K562 (cell line): ENCODE measurements at regions of chr21 and their contacts with region 1.

Region 1: GRCh38 chr21:39445321-39446269 is at the start of gene LCA5L:
- DNase-seq: peak; percentile 97 to 100 (median 100)
- ATAC-seq: peak; percentile 89
- H3K4me3 ChIP-seq: peak within 1 kb of the TSS; percentile 87
- H3K27ac ChIP-seq: peak within 1 kb of the TSS; percentile 95
- H3K4me1 ChIP-seq: peaks cover 25% of the 10 kb centered on the region in 2 experiments
- H3K27me3 ChIP-seq: no peaks in the 10 kb centered on the region
- CTCF ChIP-seq: peak; percentile 9 to 15 (median 10); a peak in 3 of 6 replicates
- EP300 ChIP-seq: 0 out of 2 replicates have a peak, but pooled peaks have one; percentile 2
- POLR2A ChIP-seq: peak; percentile 92
- RAD21 ChIP-seq: peak in 1 of 2 experiments; percentile 8; a peak in 1 of 4 replicates
- polyA plus RNA-seq, gene LCA5L: 4.2 to 4.9 TPM

Region 2: GRCh38 chr21:38544661-38545060 is 900.9 kb before region 1 on chr21:
- CTCF ChIA-PET with region 1: no interaction called
- POLR2A ChIA-PET with region 1: no interaction called
- in situ Hi-C with region 1: no loop called
- intact Hi-C with region 1: no loop called
- DNase-seq: no peak
- ATAC-seq: no peak
- H3K4me3 ChIP-seq: no peak overlapping the region
- H3K27ac ChIP-seq: no peak overlapping the region
- H3K4me1 ChIP-seq: no peaks in the 10 kb centered on the region
- H3K27me3 ChIP-seq: peaks cover 0 to 2% of the 10 kb centered on the region in 2 experiments; a peak in 1 of 5 replicates
- CTCF ChIP-seq: no peak
- EP300 ChIP-seq: no peak
- POLR2A ChIP-seq: no peak
- RAD21 ChIP-seq: no peak

Region 3: DNA sequence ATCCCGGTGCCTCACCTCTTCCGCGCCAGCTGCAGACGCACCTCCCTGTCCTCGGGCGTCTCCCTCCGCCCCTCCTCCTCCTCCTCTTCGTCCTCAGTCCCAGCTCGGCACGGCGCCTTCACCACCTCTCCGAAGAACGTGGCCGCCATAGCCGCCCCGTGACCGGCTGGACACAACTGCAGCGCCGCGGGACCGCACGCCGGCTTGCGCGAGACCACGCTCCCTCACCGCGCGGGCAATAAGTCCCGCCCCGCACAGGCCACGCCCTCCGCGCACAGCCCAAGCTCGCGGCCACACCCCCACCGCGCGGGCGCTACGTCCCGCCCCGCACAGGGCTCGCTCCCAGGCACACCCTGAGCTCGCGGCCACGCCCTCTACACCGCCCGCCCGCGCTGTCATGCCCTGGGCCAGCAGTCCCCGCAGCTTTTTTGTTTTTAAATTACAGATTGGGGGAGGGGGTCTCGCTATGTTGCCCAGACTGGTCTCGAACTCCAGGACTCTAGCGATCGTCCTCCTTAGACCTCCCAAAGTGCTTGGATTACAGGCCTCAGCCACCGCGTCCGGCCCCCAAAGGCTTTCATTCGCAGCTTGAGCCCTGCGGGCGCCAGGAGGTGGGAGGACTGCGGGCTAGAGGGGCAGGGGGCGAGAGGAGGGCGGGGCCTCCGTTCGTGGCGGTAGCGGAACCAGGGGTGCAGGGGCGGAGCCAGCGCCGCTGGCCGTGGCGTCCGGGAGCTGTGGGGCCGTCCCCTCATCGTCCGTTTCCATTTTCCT is 262.2 kb before region 1 on chr21 and contains the start of gene PSMG1:
- CTCF ChIA-PET with region 1: no interaction called
- POLR2A ChIA-PET with region 1: interaction called, 3 read pairs
- in situ Hi-C with region 1: no loop called
- intact Hi-C with region 1: loop called (anchors 5 kb)
- DNase-seq: peak; percentile 95 to 99 (median 96)
- ATAC-seq: peak; percentile 92
- H3K4me3 ChIP-seq: peak within 1 kb of the TSS; percentile 82
- H3K27ac ChIP-seq: peak within 1 kb of the TSS; percentile 93
- H3K4me1 ChIP-seq: peaks cover 8 to 11% of the 10 kb centered on the region in 2 experiments; a peak in 4 of 5 replicates
- H3K27me3 ChIP-seq: no peaks in the 10 kb centered on the region
- CTCF ChIP-seq: no peak
- EP300 ChIP-seq: no peak
- POLR2A ChIP-seq: peak; percentile 97
- RAD21 ChIP-seq: no peak
- polyA plus RNA-seq, gene PSMG1: 54.5 to 88.1 TPM

Region 4: DNA sequence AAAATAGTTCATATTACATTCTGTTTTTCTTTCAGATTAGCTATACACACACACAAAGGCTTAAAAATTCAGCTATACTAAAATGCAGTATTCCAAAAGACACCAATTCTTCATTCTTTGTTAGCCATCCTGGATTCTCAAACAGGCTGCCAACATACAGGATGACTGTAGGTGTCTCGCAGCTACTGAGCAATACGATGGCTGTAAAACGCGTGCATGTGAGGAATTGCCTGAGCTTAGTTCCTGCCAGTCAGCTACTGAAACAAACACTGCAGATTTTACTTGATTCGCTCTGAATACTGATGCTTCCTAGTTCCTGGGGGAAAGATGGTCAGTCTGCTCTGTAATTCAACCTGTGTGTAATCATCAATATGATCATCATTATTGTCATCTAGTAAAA is 72.0 kb before region 1 on chr21:
- CTCF ChIA-PET with region 1: interaction called, 3 read pairs
- POLR2A ChIA-PET with region 1: interaction called, 3 read pairs
- in situ Hi-C with region 1: no loop called
- intact Hi-C with region 1: loop called (anchors 5 kb)
- DNase-seq: peak in 2 of 4 experiments; percentile 29 to 68
- ATAC-seq: peak; percentile 66
- H3K4me3 ChIP-seq: no peak overlapping the region
- H3K27ac ChIP-seq: no peak overlapping the region
- H3K4me1 ChIP-seq: peaks cover 18 to 28% of the 10 kb centered on the region in 2 experiments
- H3K27me3 ChIP-seq: no peaks in the 10 kb centered on the region
- CTCF ChIP-seq: peak; percentile 40 to 67 (median 67); a peak in 5 of 6 replicates
- EP300 ChIP-seq: no peak
- POLR2A ChIP-seq: no peak
- RAD21 ChIP-seq: peak; percentile 39 to 69; a peak in 3 of 4 replicates

Region 5: DNA sequence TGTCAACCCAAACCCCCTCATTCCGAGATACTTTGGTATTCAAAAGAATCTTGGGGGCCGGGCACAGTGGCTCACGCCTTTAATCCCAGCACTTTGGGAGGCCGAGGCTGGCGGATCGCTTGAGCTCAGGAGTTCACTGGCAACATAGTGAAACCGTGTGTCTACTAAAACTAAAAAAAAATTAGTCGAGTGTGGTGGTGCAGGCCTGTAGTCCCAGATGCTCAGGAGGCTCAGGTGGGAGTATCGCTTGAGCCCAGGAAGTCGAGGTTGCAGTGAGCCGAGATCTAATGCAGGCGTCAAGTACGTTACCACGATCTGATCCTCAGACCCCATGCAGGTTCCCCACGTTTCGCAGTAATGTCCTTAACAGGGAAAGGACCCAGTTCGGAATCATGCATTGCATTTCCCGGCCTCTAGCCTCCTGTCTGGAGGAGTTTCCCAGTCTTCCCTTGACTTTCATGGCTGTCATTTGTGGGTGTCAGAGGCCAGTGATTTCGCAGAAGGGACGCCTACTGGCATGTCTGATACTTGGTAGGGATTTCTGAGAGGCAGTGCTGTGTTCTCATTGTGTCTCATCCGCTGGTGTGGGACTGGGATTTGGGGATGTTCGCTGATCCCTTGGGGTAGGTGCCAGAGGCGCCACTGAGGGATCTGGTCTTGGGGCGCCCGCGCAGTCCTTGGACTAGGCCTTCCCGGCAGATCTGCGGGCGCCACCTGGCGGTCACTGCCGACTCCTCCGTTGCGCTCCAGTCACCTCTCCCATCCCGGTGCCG is 57.4 kb before region 1 on chr21:
- CTCF ChIA-PET with region 1: interaction called, 8 read pairs
- POLR2A ChIA-PET with region 1: interaction called, 4 read pairs
- in situ Hi-C with region 1: no loop called
- intact Hi-C with region 1: loop called (anchors 1 kb)
- DNase-seq: peak; percentile 93 to 96 (median 94)
- ATAC-seq: peak; percentile 96
- H3K4me3 ChIP-seq: peak overlapping the region; percentile 45
- H3K27ac ChIP-seq: peak overlapping the region; percentile 72
- H3K4me1 ChIP-seq: peaks cover 13 to 34% of the 10 kb centered on the region in 2 experiments
- H3K27me3 ChIP-seq: no peaks in the 10 kb centered on the region
- CTCF ChIP-seq: peak; percentile 97 to 98 (median 97)
- EP300 ChIP-seq: 0 out of 2 replicates have a peak, but pooled peaks have one; percentile 16
- POLR2A ChIP-seq: peak; percentile 9
- RAD21 ChIP-seq: peak; percentile 98

Region 6: DNA sequence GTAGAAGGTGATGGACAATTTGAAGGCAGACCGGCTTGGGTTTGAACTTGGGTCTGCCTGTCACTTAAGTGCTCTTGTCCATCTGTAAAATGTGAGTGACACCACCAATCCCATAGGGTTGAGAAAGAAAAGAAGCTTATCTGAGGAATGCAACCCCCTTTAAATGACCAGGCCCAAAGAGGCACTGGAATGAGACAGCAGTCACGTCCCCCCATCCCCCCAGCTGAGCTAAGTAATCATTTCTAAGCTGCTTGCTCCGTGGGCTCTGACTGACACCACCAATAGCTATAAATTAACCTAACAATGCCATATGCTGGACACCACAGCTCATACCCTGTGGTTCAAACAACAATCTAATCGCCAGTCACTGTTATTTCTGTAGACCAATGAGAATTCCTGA is 15.1 kb before region 1 on chr21:
- CTCF ChIA-PET with region 1: no interaction called
- POLR2A ChIA-PET with region 1: interaction called, 14 read pairs
- in situ Hi-C with region 1: no loop called
- intact Hi-C with region 1: no loop called
- DNase-seq: peak; percentile 54 to 96 (median 74)
- ATAC-seq: peak; percentile 93
- H3K4me3 ChIP-seq: no peak overlapping the region
- H3K27ac ChIP-seq: peak overlapping the region; percentile 74
- H3K4me1 ChIP-seq: peaks cover 5 to 16% of the 10 kb centered on the region in 2 experiments; a peak in 4 of 5 replicates
- H3K27me3 ChIP-seq: no peaks in the 10 kb centered on the region
- CTCF ChIP-seq: no peak
- EP300 ChIP-seq: peak; percentile 77; the same call in 1 of the 2 replicates
- POLR2A ChIP-seq: no peak
- RAD21 ChIP-seq: no peak

Region 7: DNA sequence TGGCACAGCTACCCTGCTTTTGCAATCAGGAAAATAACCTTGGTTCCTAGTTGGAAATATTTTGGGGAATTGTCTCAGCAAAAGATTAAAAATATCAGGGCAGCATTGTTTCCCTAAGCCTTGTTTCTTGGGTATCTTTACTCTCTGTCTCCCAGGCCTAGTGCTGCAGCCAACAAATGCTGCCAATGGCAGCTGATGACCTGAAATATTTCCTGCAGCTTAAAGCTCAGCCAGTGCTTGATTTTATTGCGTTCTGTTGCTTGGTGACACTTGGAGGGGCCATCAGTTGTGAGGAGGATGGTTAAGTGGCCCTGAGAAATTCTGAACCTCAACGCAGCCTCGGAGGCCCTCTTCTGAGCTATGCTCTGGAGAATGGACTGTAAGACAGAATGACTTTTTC is 107.7 kb after region 1 on chr21:
- CTCF ChIA-PET with region 1: no interaction called
- POLR2A ChIA-PET with region 1: no interaction called
- in situ Hi-C with region 1: no loop called
- intact Hi-C with region 1: no loop called
- DNase-seq: no peak
- ATAC-seq: no peak
- H3K4me3 ChIP-seq: no peak overlapping the region
- H3K27ac ChIP-seq: no peak overlapping the region
- H3K4me1 ChIP-seq: no peaks in the 10 kb centered on the region
- H3K27me3 ChIP-seq: peaks cover 0 to 3% of the 10 kb centered on the region in 2 experiments; a peak in 1 of 5 replicates
- CTCF ChIP-seq: no peak
- EP300 ChIP-seq: no peak
- POLR2A ChIP-seq: no peak
- RAD21 ChIP-seq: no peak

Region 8: GRCh38 chr21:39715804-39716397 is 270.3 kb after region 1 on chr21:
- CTCF ChIA-PET with region 1: no interaction called
- POLR2A ChIA-PET with region 1: no interaction called
- in situ Hi-C with region 1: no loop called
- intact Hi-C with region 1: loop called (anchors 5 kb)
- DNase-seq: peak; percentile 62 to 68 (median 66)
- ATAC-seq: peak; percentile 86
- H3K4me3 ChIP-seq: no peak overlapping the region
- H3K27ac ChIP-seq: no peak overlapping the region
- H3K4me1 ChIP-seq: no peaks in the 10 kb centered on the region
- H3K27me3 ChIP-seq: peaks cover 0 to 9% of the 10 kb centered on the region in 2 experiments; a peak in 1 of 5 replicates
- CTCF ChIP-seq: peak; percentile 61 to 73 (median 62); a peak in 4 of 6 replicates
- EP300 ChIP-seq: no peak
- POLR2A ChIP-seq: no peak
- RAD21 ChIP-seq: peak; percentile 51 to 70; a peak in 3 of 4 replicates